Dorsolateral prefrontal cortex (tissue), 120 donors: ENCODE measurements at regions of chr17 and their contacts with region 1.

Region 1: GRCh38 chr17:65556014-65556909 is 5.2 kb downstream of the AXIN2 start:
- DNase-seq: peak in 9 of 10 donors; percentile 57 to 86 (median 79)
- H3K4me3 ChIP-seq: peak overlapping the region in 10 of 59 donors; percentile 4 to 92 (median 78)
- H3K27ac ChIP-seq: peak overlapping the region in 30 of 59 donors; percentile 3 to 94 (median 56)
- H3K27me3 ChIP-seq: no peaks in the 10 kb centered on the region
- CTCF ChIP-seq: peak; percentile 62 to 94 (median 85)

Region 2: GRCh38 chr17:65294179-65294720 is 262.0 kb before region 1 on chr17:
- intact Hi-C with region 1: loop called (anchors 5 to 10 kb)
- DNase-seq: peak; percentile 20 to 77 (median 61)
- H3K4me3 ChIP-seq: peak overlapping the region in 1 of 59 donors; percentile 9
- H3K27ac ChIP-seq: no peak overlapping the region
- H3K27me3 ChIP-seq: no peaks in the 10 kb centered on the region
- CTCF ChIP-seq: peak; percentile 39 to 86 (median 77)

Region 3: GRCh38 chr17:65455972-65456343 is 100.3 kb before region 1 on chr17:
- intact Hi-C with region 1: loop called (anchors 5 to 10 kb)
- DNase-seq: no peak
- H3K4me3 ChIP-seq: no peak overlapping the region
- H3K27ac ChIP-seq: no peak overlapping the region
- H3K27me3 ChIP-seq: peaks cover 0 to 3% (median 0%) of the 10 kb centered on the region in 45 donors
- CTCF ChIP-seq: peak in 48 of 56 donors; percentile 10 to 68 (median 36)

Region 4: DNA sequence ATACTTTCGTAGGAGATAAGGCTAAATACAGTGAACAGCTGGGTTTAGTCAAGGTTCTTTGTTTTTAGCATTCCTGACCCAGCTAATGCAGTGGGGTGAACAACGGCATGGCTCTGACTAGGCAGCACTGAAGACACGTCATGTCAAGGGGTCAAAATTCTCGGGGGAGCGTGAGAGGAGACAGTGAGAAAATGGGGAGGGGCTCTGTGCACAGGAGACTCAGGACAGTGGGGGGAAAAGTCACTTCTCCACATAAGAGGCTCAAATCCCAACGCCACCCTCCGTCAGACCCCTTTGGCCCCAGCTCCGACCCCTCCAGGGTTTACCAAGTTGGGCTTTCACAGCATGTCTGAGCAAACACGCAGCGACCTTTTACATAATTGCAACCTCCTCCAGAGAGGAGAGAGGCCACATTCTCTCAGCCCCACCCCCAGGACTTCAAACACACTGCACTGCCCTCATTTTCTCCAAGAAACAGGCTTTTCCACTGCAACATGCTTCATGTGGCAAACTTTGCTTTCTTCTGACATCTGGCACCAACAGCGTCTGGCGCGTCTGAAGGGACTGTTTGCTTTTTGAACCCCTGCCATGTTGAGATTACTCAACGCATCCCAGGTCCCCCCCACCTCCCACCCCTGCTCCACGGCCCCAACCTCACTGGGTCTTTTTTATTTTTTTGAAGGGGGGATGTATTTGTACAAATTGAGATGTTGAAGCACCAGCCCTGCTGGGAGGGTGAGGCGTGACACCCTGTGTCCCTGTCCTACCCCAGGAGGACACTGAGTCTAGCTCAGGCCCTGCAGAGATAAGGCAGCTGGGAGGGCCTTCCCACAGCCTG is 24.8 kb before region 1 on chr17:
- intact Hi-C with region 1: no loop called
- DNase-seq: no peak
- H3K4me3 ChIP-seq: no peak overlapping the region
- H3K27ac ChIP-seq: peak overlapping the region in 55 of 59 donors; percentile 25 to 84 (median 65)
- H3K27me3 ChIP-seq: no peaks in the 10 kb centered on the region
- CTCF ChIP-seq: peak in 12 of 56 donors; percentile 12 to 39 (median 28)

Region 5: GRCh38 chr17:65914784-65915350 is 358.6 kb after region 1 on chr17:
- intact Hi-C with region 1: no loop called
- DNase-seq: no peak
- H3K4me3 ChIP-seq: no peak overlapping the region
- H3K27ac ChIP-seq: peak overlapping the region in 2 of 59 donors; percentile 39 to 57
- H3K27me3 ChIP-seq: no peaks in the 10 kb centered on the region
- CTCF ChIP-seq: no peak